ENCODE measurements at regions of chr2 and their contacts with region 1.

Region 1: GRCh38 chr2:75710577-75711253 is at the start of gene GCFC2:
- DNase-seq: peak; percentile 88 to 94 (median 93)
- ATAC-seq: peak; percentile 93 to 99 (median 98)
- H3K4me3 ChIP-seq: peak within 1 kb of the TSS; percentile 60 to 90 (median 77)
- H3K27ac ChIP-seq: peak within 1 kb of the TSS; percentile 46 to 95 (median 92)
- H3K4me1 ChIP-seq: peaks cover 0 to 28% (median 9%) of the 10 kb centered on the region in 12 donors
- H3K27me3 ChIP-seq: no peaks in the 10 kb centered on the region
- CTCF ChIP-seq: peak; percentile 25 to 68 (median 46)
- POLR2A ChIP-seq: peak in 1 of 2 donors; percentile 68
- total RNA-seq, gene GCFC2: 9.9 to 16.5 (median 13.3) TPM

Region 2: GRCh38 chr2:75614056-75614710 is 96.5 kb before region 1 on chr2:
- intact Hi-C with region 1: no loop called
- DNase-seq: no peak
- ATAC-seq: no peak
- H3K4me3 ChIP-seq: no peak overlapping the region
- H3K27ac ChIP-seq: no peak overlapping the region
- H3K4me1 ChIP-seq: no peaks in the 10 kb centered on the region
- H3K27me3 ChIP-seq: peaks cover 0 to 14% (median 3%) of the 10 kb centered on the region in 9 donors
- CTCF ChIP-seq: no peak
- POLR2A ChIP-seq: no peak

Region 3: DNA sequence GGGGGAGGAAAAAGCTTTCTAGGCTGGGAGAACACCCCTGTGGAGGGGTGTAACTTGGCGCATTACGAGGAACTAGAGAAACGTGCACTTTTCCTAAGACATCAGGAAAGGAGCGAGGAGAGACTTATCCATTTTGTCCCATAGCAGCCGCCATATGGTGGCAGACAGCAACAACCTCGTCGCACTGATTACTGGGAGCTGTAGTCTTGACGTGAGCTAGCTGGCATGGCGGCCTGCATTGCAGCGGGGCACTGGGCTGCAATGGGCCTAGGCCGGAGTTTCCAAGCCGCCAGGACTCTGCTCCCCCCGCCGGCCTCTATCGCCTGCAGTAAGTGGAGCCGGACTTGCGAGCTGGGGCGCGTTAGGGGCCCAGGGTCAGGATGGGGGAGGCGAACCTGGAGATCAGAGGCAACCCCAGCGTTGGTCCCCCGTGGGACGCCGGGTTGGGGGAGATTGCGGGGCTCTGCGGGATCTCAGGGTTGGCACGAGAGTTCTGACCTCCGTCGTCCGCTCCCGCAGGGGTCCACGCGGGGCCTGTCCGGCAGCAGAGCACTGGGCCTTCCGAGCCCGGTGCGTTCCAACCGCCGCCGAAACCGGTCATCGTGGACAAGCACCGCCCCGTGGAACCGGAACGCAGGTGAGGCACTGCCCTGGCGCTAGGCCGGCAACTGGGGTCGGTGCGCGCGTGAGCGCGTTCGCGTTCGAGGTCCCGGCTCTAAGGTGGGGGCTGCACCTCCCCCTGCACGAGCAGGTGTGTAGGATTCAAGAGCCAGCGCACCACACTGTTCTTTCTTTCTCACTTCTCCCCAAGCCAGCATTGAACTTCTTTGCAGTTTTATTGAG is 63.9 kb before region 1 on chr2 and contains the start of gene MRPL19:
- intact Hi-C with region 1: loop called in 6 of 10 experiments (anchors 2 to 10 kb)
- DNase-seq: peak; percentile 87 to 92 (median 90)
- ATAC-seq: peak; percentile 98 to 100 (median 99)
- H3K4me3 ChIP-seq: peak within 1 kb of the TSS; percentile 71 to 97 (median 92)
- H3K27ac ChIP-seq: peak within 1 kb of the TSS; percentile 18 to 88 (median 72)
- H3K4me1 ChIP-seq: peaks cover 0 to 24% (median 12%) of the 10 kb centered on the region in 12 donors
- H3K27me3 ChIP-seq: no peaks in the 10 kb centered on the region
- CTCF ChIP-seq: no peak
- POLR2A ChIP-seq: peak in 1 of 2 donors; percentile 56
- total RNA-seq, gene MRPL19: 40.7 to 82.8 (median 56.7) TPM

Region 4: GRCh38 chr2:75654012-75654411 is 56.7 kb before region 1 on chr2:
- intact Hi-C with region 1: loop called in 4 of 10 experiments (anchors 5 to 10 kb)
- DNase-seq: no peak
- ATAC-seq: no peak
- H3K4me3 ChIP-seq: no peak overlapping the region
- H3K27ac ChIP-seq: no peak overlapping the region
- H3K4me1 ChIP-seq: peaks cover 0 to 3% (median 0%) of the 10 kb centered on the region in 12 donors
- H3K27me3 ChIP-seq: no peaks in the 10 kb centered on the region
- CTCF ChIP-seq: no peak
- POLR2A ChIP-seq: no peak

Region 5: DNA sequence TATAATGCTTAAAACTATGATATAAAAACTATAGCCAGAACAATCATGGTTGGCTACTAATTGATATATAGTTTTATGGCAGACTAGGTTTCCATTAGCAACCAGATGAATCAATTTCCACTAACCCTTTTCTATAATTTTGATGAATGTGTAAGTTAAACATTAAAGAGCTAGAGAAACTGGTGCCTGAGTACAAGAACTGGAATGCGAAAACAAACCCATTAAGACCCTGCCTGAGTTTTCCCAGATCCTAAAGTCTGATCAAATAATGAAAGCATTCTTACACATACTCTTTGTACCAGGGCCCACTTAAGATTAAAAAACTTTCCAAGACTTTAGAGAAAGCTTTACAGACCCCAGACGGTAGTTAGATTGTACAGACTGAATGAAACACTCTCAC is 42.8 kb before region 1 on chr2:
- intact Hi-C with region 1: no loop called
- DNase-seq: no peak
- ATAC-seq: no peak
- H3K4me3 ChIP-seq: no peak overlapping the region
- H3K27ac ChIP-seq: no peak overlapping the region
- H3K4me1 ChIP-seq: no peaks in the 10 kb centered on the region
- H3K27me3 ChIP-seq: no peaks in the 10 kb centered on the region
- CTCF ChIP-seq: no peak
- POLR2A ChIP-seq: no peak

Region 6: GRCh38 chr2:76268928-76269610 is 558.4 kb after region 1 on chr2:
- intact Hi-C with region 1: no loop called
- DNase-seq: no peak
- ATAC-seq: no peak
- H3K4me3 ChIP-seq: no peak overlapping the region
- H3K27ac ChIP-seq: no peak overlapping the region
- H3K4me1 ChIP-seq: peaks cover 0 to 4% (median 0%) of the 10 kb centered on the region in 12 donors
- H3K27me3 ChIP-seq: no peaks in the 10 kb centered on the region
- CTCF ChIP-seq: no peak
- POLR2A ChIP-seq: no peak

Measured in heart left ventricle (tissue), 16 donors.